Mammary epithelial cell (primary cell): ENCODE measurements at regions of chr4 and their contacts with region 1.

Region 1: GRCh38 chr4:57043347-57044251 is 64.9 kb downstream of the POLR2B start:
- DNase-seq: no peak
- H3K4me3 ChIP-seq: no peak overlapping the region
- H3K27ac ChIP-seq: no peak overlapping the region
- H3K4me1 ChIP-seq: peaks cover 33% of the 10 kb centered on the region
- H3K27me3 ChIP-seq: no peaks in the 10 kb centered on the region
- CTCF ChIP-seq: no peak

Region 2: DNA sequence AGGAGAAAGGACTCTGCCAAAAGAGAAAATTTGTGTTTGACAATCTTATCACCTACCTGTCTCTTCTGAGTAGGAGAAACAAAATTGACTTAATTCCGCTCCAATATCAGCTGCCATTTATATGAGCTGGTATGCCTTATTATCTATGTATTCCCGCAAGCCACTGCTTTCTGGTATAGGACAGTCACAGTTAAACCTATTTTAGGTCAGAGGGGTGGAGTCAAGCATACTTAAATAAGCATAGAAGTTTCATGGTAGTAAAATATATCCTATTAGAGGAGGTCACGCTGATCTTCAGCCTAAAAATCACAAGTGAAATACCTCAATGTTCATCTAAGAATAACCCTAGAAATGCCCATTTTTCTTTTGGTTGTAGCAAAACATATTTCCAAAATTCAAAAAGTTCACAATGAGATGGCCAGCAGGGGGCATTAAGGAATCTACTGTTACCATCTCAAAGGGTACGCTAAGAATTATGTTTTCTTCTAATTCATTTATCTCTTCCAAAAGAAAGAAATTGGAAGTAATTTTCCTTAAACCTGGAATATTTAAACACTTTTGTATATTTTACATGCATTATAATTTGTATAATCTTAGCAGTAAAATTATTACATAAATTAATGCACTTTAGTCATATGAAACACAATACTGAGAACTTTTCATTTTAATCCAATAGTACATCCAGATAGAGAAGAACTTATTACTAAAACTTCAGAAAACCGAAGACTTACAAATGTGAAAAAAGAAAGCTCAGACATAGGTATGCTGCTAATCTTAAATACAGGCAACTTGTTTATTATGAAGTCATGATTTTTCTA is 618.7 kb before region 1 on chr4:
- CTCF ChIA-PET with region 1: no interaction called
- dilution Hi-C with region 1: no loop called
- in situ Hi-C with region 1: no loop called
- intact Hi-C with region 1: no loop called
- DNase-seq: no peak
- H3K4me3 ChIP-seq: no peak overlapping the region
- H3K27ac ChIP-seq: no peak overlapping the region
- H3K4me1 ChIP-seq: no peaks in the 10 kb centered on the region
- H3K27me3 ChIP-seq: no peaks in the 10 kb centered on the region
- CTCF ChIP-seq: peak; percentile 59 to 63

Region 3: GRCh38 chr4:57158221-57158620 is 114.6 kb after region 1 on chr4:
- CTCF ChIA-PET with region 1: no interaction called
- dilution Hi-C with region 1: no loop called
- in situ Hi-C with region 1: loop called (anchors 10 kb)
- intact Hi-C with region 1: loop called (anchors 1 kb)
- DNase-seq: no peak
- H3K4me3 ChIP-seq: no peak overlapping the region
- H3K27ac ChIP-seq: no peak overlapping the region
- H3K4me1 ChIP-seq: peaks cover 14% of the 10 kb centered on the region
- H3K27me3 ChIP-seq: no peaks in the 10 kb centered on the region
- CTCF ChIP-seq: peak in 1 of 2 donors; percentile 8

Region 4: DNA sequence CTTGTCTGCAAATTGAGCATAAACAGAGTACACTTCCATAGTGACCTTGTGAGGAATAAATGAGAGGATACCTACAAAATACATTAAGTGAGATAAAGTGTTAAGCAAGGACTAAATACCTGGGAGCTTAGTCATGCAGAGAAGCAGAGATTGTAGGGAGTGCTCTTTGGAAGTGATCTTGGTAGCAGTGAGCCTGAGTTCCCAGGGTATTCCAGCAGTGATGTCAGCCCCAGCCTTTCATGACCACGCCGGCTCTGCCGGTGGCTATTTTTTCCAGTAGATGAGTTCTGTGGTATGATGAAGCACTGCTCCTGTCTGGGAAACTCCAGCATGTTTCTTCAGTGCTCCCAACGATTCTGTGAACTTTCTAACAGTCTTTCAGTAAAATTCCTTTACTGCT is 458.1 kb after region 1 on chr4:
- CTCF ChIA-PET with region 1: no interaction called
- dilution Hi-C with region 1: no loop called
- in situ Hi-C with region 1: no loop called
- intact Hi-C with region 1: no loop called
- DNase-seq: peak; percentile 47
- H3K4me3 ChIP-seq: no peak overlapping the region
- H3K27ac ChIP-seq: no peak overlapping the region
- H3K4me1 ChIP-seq: no peaks in the 10 kb centered on the region
- H3K27me3 ChIP-seq: no peaks in the 10 kb centered on the region
- CTCF ChIP-seq: no peak